Gastrocnemius medialis (tissue), 4 donors: ENCODE measurements at regions of chr9 and their contacts with region 1.

Region 1: GRCh38 chr9:3525836-3526164 is at the start of gene RFX3:
- DNase-seq: peak; percentile 88 to 89
- ATAC-seq: peak; percentile 77 to 80
- H3K4me3 ChIP-seq: peak within 1 kb of the TSS; percentile 79 to 95 (median 85)
- H3K27ac ChIP-seq: peak within 1 kb of the TSS; percentile 97 to 100 (median 100)
- H3K4me1 ChIP-seq: peaks cover 28 to 47% of the 10 kb centered on the region in 2 donors
- H3K27me3 ChIP-seq: no peaks in the 10 kb centered on the region
- CTCF ChIP-seq: no peak
- POLR2A ChIP-seq: no peak
- total RNA-seq, gene RFX3: 2.1 to 11.5 (median 7.3) TPM

Region 2: DNA sequence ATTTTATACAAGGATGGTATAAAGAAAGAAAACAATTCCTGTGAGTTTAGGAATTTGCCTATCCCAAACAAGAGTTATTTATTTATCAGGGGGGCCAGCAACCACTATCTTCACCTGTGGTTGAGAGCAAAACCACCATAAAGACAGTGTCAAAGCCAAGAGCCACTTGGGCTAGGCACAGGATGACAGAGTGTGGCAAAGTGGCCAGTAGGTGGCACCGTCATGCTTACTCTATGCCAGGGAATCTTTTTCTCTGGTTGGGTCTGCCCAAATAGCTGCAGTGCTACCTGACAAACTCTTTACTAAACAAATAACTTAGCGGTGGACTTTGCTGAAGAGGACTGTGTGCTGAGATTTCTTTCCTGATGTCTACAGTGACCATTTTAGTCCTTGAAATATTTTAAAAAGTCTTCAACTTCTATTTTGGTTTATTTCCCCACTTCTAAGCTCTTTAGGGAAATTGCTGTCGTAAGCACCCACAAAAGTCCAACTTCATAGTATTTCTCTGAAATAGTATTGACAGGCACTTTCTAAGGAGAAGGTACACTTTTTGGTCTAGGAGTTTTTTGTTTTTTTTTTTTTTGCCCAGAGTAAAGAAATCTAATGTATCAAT is 285.0 kb before region 1 on chr9:
- in situ Hi-C with region 1: loop called in 1 of 4 experiments (anchors 25 kb)
- intact Hi-C with region 1: no loop called
- DNase-seq: peak; percentile 15 to 34
- ATAC-seq: peak; percentile 45 to 77
- H3K4me3 ChIP-seq: no peak overlapping the region
- H3K27ac ChIP-seq: no peak overlapping the region
- H3K4me1 ChIP-seq: no peaks in the 10 kb centered on the region
- H3K27me3 ChIP-seq: no peaks in the 10 kb centered on the region
- CTCF ChIP-seq: peak; percentile 33 to 67 (median 56)
- POLR2A ChIP-seq: no peak

Region 3: DNA sequence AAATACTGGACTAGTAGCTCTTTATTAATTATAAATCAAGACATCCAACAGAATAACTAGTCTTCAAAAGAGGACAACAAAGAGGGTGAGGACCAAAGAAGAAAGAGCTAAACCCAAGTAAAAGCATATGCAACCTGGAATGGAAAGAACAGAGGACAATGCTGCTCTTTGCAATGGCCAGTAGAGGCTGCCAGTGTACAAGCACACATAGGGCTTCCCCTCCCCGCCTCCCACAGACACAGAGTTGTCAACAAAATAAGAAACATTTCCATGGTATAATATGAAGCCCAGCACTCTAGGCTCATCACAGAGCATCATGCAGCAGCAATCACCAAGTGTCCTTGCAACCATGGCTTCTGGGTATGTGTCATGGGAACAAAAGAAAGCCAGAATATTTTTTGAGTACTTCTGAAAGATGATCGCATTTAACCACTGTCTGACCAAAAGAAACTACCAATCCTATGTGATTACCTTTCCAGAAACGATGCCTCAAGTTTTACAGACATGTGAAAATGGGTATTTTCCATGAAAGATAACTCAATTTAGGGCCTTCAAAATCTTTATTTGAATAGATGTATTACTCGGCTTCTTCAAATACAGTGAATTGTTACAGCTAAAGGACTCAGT is 58.1 kb before region 1 on chr9:
- in situ Hi-C with region 1: no loop called
- intact Hi-C with region 1: loop called (anchors 5 kb)
- DNase-seq: peak; percentile 49 to 61
- ATAC-seq: peak; percentile 95 to 98
- H3K4me3 ChIP-seq: no peak overlapping the region
- H3K27ac ChIP-seq: peak overlapping the region in 1 of 4 donors; percentile 2
- H3K4me1 ChIP-seq: peaks cover 17 to 18% of the 10 kb centered on the region in 2 donors
- H3K27me3 ChIP-seq: no peaks in the 10 kb centered on the region
- CTCF ChIP-seq: peak; percentile 45 to 89 (median 72)
- POLR2A ChIP-seq: no peak

Region 4: GRCh38 chr9:4297151-4297785 is 771.5 kb after region 1 on chr9:
- in situ Hi-C with region 1: no loop called
- intact Hi-C with region 1: loop called (anchors 5 kb)
- DNase-seq: peak; percentile 68 to 70
- ATAC-seq: peak; percentile 59 to 69
- H3K4me3 ChIP-seq: peak overlapping the region; percentile 67 to 87 (median 76)
- H3K27ac ChIP-seq: peak overlapping the region; percentile 80 to 87 (median 84)
- H3K4me1 ChIP-seq: peaks cover 14 to 20% of the 10 kb centered on the region in 2 donors
- H3K27me3 ChIP-seq: no peaks in the 10 kb centered on the region
- CTCF ChIP-seq: peak in 3 of 5 experiments; percentile 32 to 52 (median 47)
- POLR2A ChIP-seq: no peak

Region 5: DNA sequence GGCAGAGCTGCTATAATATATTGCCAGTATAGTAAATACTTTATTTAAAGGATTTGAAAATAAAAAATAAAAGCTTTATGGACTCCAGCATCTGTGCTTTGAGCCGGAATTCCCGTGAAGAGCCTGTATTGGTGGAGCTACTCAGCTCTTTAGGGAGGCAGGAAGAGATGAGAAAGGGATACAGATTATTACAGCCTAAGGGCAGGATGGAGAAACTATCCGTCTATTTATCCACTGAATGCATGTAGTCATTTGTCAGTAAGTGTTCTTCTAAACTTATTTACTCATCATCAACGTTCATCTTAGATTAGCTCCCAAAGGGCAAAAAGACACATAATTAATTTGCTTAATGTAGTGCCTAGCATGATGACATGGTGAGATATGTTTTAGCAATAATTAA is 1012.8 kb after region 1 on chr9:
- in situ Hi-C with region 1: no loop called
- intact Hi-C with region 1: no loop called
- DNase-seq: no peak
- ATAC-seq: no peak
- H3K4me3 ChIP-seq: no peak overlapping the region
- H3K27ac ChIP-seq: no peak overlapping the region
- H3K4me1 ChIP-seq: no peaks in the 10 kb centered on the region
- H3K27me3 ChIP-seq: no peaks in the 10 kb centered on the region
- CTCF ChIP-seq: no peak
- POLR2A ChIP-seq: no peak